ENCODE measurements at regions of chr6 and their contacts with region 1.

Region 1: GRCh38 chr6:109095027-109095834 is at the start of gene CEP57L1:
- DNase-seq: peak; percentile 97
- H3K4me3 Mint-ChIP-seq: peak within 1 kb of the TSS; percentile 84
- H3K27ac Mint-ChIP-seq: peak within 1 kb of the TSS; percentile 95
- H3K4me1 Mint-ChIP-seq: peaks cover 38% of the 10 kb centered on the region
- H3K27me3 Mint-ChIP-seq: no peaks in the 10 kb centered on the region
- total RNA-seq, gene CEP57L1: 33.3 to 33.5 TPM

Region 2: DNA sequence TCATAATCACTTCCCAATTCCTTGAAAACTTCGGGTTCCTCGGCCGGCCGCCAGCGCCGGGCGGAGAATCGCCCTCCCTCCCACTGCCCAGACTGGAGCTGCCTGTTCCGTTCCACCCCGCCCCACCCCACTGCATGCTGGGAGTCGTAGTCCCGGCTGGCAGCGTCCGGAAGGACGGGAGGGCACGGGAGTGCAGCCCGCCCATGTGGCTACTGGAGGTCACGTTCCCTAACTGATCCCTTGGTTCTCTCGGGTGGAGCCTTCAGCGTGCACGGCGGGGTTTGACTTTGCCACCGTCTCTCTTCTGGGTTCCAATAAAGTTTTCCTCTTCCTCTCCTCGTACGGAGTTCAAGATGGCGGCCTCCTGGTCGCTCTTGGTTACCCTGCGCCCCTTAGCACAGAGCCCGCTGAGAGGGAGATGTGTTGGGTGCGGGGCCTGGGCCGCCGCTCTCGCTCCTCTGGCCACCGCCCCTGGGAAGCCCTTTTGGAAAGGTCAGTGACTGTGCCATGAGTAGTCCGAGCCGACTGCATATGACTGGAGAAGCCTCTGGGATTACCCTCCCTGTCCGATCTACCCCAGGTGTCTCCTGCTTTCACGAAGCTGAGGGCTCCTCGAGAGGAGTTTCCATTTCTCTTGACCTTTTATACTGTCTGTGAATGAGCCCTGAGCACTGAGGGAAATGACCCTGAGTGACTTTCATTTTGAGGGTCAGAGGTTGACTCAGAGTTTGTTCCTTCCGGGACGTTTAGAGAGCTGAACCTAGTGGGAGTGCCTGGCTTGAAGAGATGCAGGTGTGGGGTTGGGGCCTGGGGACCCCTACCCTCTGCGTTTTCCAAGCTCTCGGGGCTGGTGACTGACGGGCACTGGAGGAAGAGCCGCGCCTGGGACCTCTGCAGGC is 800.3 kb before region 1 on chr6 and contains the start of gene AFG1L:
- CTCF ChIA-PET with region 1: no interaction called
- intact Hi-C with region 1: loop called (anchors 1 kb)
- DNase-seq: peak; percentile 91
- H3K4me3 Mint-ChIP-seq: peak within 1 kb of the TSS; percentile 99
- H3K27ac Mint-ChIP-seq: peak within 1 kb of the TSS; percentile 100
- H3K4me1 Mint-ChIP-seq: peaks cover 19% of the 10 kb centered on the region
- H3K27me3 Mint-ChIP-seq: no peaks in the 10 kb centered on the region
- total RNA-seq, gene AFG1L: 5.4 to 5.9 TPM

Region 3: GRCh38 chr6:108848116-108848868 is 246.9 kb before region 1 on chr6 and contains the start of gene ARMC2:
- CTCF ChIA-PET with region 1: no interaction called
- intact Hi-C with region 1: loop called (anchors 1 kb)
- DNase-seq: peak; percentile 87
- H3K4me3 Mint-ChIP-seq: peak within 1 kb of the TSS; percentile 82
- H3K27ac Mint-ChIP-seq: peak within 1 kb of the TSS; percentile 28
- H3K4me1 Mint-ChIP-seq: peaks cover 20% of the 10 kb centered on the region
- H3K27me3 Mint-ChIP-seq: no peaks in the 10 kb centered on the region
- total RNA-seq, gene ARMC2: 3.6 to 3.9 TPM

Region 4: DNA sequence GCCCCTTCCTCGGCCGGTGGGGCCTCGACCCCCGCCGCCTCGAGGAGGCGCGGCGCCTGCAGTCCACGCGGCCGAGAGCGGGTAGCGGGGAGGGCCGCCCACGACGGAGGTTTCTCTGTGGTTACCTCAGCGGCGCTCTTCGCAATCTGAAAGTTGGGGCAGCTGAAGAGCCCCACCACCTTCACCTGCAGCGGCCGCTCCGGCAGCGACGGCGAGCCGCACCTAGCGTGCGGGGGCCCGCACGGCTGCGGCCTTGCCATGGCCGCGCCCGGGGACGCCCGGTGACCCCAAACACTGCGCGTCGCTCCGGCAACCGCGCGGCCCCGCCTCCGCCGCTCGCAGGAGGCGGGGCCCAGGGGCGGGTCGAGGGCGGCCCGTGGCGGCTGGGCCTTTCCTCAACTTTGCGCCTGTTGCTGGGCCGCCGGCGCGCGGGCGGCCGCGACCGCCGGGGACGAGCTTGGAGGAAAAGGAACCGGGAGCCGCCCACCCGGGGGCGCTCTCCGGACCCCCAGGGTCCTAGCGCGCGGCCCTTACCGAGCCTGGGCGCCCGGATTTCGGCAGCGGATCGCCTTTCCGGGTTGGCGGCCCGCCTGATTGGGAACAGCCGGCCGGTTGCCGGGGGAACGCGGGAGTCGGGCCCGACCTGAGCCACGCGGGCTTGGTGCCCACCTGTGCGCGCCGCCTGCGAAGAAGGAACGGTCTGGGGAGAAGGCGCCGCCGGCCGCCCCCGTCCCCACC is 345.3 kb after region 1 on chr6 and contains the starts of genes PPIL6 and SMPD2:
- CTCF ChIA-PET with region 1: no interaction called
- intact Hi-C with region 1: loop called (anchors 2 kb)
- DNase-seq: peak; percentile 76
- H3K4me3 Mint-ChIP-seq: peak within 1 kb of the TSS; percentile 94
- H3K27ac Mint-ChIP-seq: peak within 1 kb of the TSS; percentile 87
- H3K4me1 Mint-ChIP-seq: peaks cover 27% of the 10 kb centered on the region
- H3K27me3 Mint-ChIP-seq: no peaks in the 10 kb centered on the region
- total RNA-seq, gene PPIL6: 0.19 TPM in 1 of 2 experiments, not detected in the other
- total RNA-seq, gene SMPD2: 9.4 to 9.7 TPM

Region 5: DNA sequence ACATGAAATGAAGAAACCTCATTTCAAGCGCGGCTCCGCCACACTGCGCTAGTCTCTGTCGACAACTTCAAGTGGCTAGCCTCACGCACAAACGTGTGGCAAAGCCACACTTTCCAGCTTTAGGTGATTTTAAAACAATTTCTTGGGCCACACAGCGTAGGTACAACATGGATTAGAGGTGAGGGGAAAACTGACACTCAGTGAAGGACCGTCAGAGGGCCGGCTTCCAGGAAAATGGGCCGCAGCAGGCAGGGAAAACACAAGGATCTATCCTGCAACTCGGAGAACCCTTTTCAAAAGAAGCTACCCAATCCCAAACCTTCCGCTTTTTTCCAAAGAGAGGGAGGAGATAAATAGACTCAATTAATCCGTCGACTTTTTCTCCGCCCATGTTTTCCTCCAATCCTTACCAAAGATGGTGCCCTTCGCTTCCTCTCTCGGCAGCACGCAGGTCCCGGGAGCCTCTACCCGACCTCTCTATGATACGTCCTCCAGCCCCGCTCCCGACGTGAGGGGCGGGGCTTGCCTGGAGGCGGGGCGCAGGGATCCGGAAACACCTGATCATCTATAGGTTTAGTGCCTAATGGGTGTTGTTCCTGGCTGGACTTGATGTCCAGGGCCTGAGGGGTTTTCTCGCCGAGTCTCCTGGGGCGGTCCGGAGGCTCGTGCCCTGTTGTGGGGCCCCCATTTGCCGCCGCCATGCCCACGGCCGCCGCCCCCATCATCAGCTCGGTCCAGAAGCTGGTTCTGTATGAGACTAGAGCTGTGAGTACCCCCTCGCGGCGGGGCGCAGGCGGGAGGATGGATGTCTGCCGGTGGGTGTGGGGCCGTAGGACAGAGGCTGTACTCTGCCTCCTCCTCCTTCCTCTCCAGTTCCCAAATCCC is 595.7 kb after region 1 on chr6 and contains the starts of genes AK9 and FIG4:
- CTCF ChIA-PET with region 1: no interaction called
- intact Hi-C with region 1: loop called (anchors 1 kb)
- DNase-seq: peak; percentile 94
- H3K4me3 Mint-ChIP-seq: peak within 1 kb of the TSS; percentile 83
- H3K27ac Mint-ChIP-seq: peak within 1 kb of the TSS; percentile 81
- H3K4me1 Mint-ChIP-seq: peaks cover 26% of the 10 kb centered on the region
- H3K27me3 Mint-ChIP-seq: no peaks in the 10 kb centered on the region
- total RNA-seq, gene AK9: 1.7 TPM
- total RNA-seq, gene FIG4: 14.0 to 16.4 TPM

Measured in activated naive CD4-positive, alpha-beta T cell treated with anti-CD3 and anti-CD28 coated beads for 36 hours (primary cell).